Activated CD8-positive, alpha-beta T cell treated with anti-CD3 and anti-CD28 coated beads for 36 hours (primary cell): ENCODE measurements at regions of chr11 and their contacts with region 1.

Region 1: GRCh38 chr11:58567889-58568512 is 7.7 kb downstream of the LPXN start:
- DNase-seq: peak; percentile 89
- ATAC-seq: peak; percentile 97
- H3K4me3 Mint-ChIP-seq: peak overlapping the region; percentile 39
- H3K27ac Mint-ChIP-seq: peak overlapping the region; percentile 90
- H3K4me1 Mint-ChIP-seq: peaks cover 64% of the 10 kb centered on the region
- H3K27me3 Mint-ChIP-seq: no peaks in the 10 kb centered on the region
- CTCF ChIP-seq: peak; percentile 73

Region 2: GRCh38 chr11:58433638-58434203 is 134.3 kb before region 1 on chr11:
- CTCF ChIA-PET with region 1: no interaction called
- POLR2A ChIA-PET with region 1: no interaction called
- intact Hi-C with region 1: no loop called
- DNase-seq: no peak
- ATAC-seq: no peak
- H3K4me3 Mint-ChIP-seq: no peak overlapping the region
- H3K27ac Mint-ChIP-seq: no peak overlapping the region
- H3K4me1 Mint-ChIP-seq: no peaks in the 10 kb centered on the region
- H3K27me3 Mint-ChIP-seq: peaks cover 2% of the 10 kb centered on the region
- CTCF ChIP-seq: no peak

Region 3: DNA sequence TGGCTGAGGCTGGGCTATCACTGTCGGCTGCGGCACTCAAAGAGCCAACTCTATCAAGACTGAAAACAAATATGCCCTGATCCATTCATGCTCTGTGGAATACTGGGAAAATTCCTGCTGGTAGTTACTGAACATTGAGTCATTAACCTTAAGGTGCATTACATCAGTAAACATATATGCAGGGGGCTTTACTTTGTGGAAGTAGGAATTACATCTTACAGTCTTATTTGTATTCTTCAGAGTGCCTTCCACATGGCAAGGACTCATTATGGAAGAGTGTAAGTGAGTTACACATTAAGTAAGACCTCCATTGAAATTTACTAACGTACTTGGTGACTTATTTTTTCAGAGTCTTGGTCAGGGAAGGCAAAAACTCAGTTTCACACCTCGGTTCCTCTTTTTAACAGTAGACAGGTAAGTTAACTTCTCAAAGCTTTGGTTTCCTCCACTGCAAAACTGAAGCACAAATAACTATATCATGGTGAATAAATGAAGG is 64.6 kb before region 1 on chr11:
- CTCF ChIA-PET with region 1: no interaction called
- POLR2A ChIA-PET with region 1: no interaction called
- intact Hi-C with region 1: no loop called
- DNase-seq: no peak
- ATAC-seq: no peak
- H3K4me3 Mint-ChIP-seq: no peak overlapping the region
- H3K27ac Mint-ChIP-seq: no peak overlapping the region
- H3K4me1 Mint-ChIP-seq: peaks cover 30% of the 10 kb centered on the region
- H3K27me3 Mint-ChIP-seq: no peaks in the 10 kb centered on the region
- CTCF ChIP-seq: no peak

Region 4: GRCh38 chr11:58549644-58550043 is 18.4 kb before region 1 on chr11:
- CTCF ChIA-PET with region 1: interaction called, 37 read pairs
- POLR2A ChIA-PET with region 1: interaction called, 5 read pairs
- intact Hi-C with region 1: no loop called
- DNase-seq: no peak
- ATAC-seq: no peak
- H3K4me3 Mint-ChIP-seq: no peak overlapping the region
- H3K27ac Mint-ChIP-seq: no peak overlapping the region
- H3K4me1 Mint-ChIP-seq: peaks cover 14% of the 10 kb centered on the region
- H3K27me3 Mint-ChIP-seq: no peaks in the 10 kb centered on the region
- CTCF ChIP-seq: no peak

Region 5: DNA sequence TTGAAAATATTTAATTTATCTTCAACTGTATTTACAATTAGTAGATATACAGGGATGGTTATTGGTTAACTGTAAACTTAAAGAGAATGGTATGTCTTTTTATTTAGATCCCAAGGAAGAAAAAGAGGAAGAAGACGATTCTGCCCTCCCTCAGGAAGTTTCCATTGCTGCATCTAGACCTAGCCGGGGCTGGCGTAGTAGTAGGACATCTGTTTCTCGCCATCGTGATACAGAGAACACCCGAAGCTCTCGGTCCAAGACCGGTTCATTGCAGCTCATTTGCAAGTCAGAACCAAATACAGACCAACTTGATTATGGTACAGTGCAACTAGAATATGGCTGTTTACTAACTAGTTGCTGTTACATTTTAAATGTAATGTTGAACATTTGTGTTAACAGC is 41.7 kb after region 1 on chr11:
- CTCF ChIA-PET with region 1: interaction called, 11 read pairs
- POLR2A ChIA-PET with region 1: no interaction called
- intact Hi-C with region 1: no loop called
- DNase-seq: no peak
- ATAC-seq: no peak
- H3K4me3 Mint-ChIP-seq: no peak overlapping the region
- H3K27ac Mint-ChIP-seq: no peak overlapping the region
- H3K4me1 Mint-ChIP-seq: peaks cover 54% of the 10 kb centered on the region
- H3K27me3 Mint-ChIP-seq: no peaks in the 10 kb centered on the region
- CTCF ChIP-seq: no peak

Region 6: DNA sequence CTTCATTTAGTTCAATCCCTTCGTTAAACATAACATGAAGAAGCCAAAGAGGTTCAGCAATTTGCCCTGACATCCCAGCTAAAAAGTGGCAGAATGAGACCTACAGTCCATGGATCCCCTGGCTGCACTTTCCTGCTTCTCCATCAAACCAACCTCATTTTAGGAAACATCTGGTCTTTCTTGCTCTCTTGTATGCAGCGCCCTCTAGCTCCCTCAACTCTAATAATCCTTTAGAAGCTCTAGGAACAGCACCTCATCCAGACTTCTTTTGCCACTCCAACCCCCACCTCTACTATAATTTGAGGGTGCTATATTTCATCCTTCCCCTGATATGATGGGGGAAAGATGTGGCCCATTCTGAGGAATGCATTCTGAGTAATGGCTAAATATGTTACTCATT is 61.9 kb after region 1 on chr11:
- CTCF ChIA-PET with region 1: interaction called, 54 read pairs
- POLR2A ChIA-PET with region 1: interaction called, 7 read pairs
- intact Hi-C with region 1: no loop called
- DNase-seq: peak; percentile 45
- ATAC-seq: peak; percentile 70
- H3K4me3 Mint-ChIP-seq: no peak overlapping the region
- H3K27ac Mint-ChIP-seq: peak overlapping the region; percentile 18
- H3K4me1 Mint-ChIP-seq: peaks cover 9% of the 10 kb centered on the region
- H3K27me3 Mint-ChIP-seq: no peaks in the 10 kb centered on the region
- CTCF ChIP-seq: peak; percentile 43

Region 7: DNA sequence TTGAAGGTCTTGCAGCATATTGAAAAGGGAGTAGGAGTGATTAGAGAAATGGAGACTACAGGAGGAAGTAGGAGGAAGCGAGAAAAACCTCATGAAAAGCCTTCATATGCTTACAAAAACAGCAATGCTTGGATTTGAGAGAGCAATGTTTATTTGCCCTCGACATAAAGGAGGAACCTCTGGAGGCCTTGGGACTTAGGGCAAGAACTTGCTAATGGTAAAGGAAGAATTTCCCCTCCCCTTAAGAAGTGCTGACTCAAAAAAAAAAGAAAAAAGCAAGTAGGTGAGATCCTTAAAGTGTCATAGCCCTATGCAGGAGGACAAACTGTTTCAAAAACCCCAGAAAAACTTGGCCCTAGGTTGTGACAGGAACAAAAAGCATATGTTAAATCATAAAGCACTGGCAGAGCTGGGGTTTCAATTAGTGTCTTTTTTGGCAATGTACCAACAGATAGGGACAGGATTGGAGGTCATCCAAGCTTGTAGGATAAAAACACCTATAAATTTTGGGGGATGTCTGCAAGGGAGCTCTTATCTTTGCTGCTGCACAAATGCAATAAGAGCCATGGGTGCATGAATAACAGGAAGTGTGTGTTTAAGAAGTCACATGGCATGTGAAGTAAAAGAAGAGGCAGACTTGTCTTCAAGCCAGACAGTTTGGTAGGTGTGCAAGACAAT is 158.9 kb after region 1 on chr11:
- CTCF ChIA-PET with region 1: no interaction called
- POLR2A ChIA-PET with region 1: no interaction called
- intact Hi-C with region 1: no loop called
- DNase-seq: no peak
- ATAC-seq: peak; percentile 30
- H3K4me3 Mint-ChIP-seq: no peak overlapping the region
- H3K27ac Mint-ChIP-seq: peak overlapping the region; percentile 73
- H3K4me1 Mint-ChIP-seq: peaks cover 37% of the 10 kb centered on the region
- H3K27me3 Mint-ChIP-seq: no peaks in the 10 kb centered on the region
- CTCF ChIP-seq: no peak

Region 8: GRCh38 chr11:58856806-58857205 is 288.8 kb after region 1 on chr11:
- CTCF ChIA-PET with region 1: no interaction called
- POLR2A ChIA-PET with region 1: no interaction called
- intact Hi-C with region 1: no loop called
- DNase-seq: no peak
- ATAC-seq: no peak
- H3K4me3 Mint-ChIP-seq: no peak overlapping the region
- H3K27ac Mint-ChIP-seq: no peak overlapping the region
- H3K4me1 Mint-ChIP-seq: no peaks in the 10 kb centered on the region
- H3K27me3 Mint-ChIP-seq: peaks cover 12% of the 10 kb centered on the region
- CTCF ChIP-seq: no peak